ENCODE measurements at regions of chr12 and their contacts with region 1.

Region 1: DNA sequence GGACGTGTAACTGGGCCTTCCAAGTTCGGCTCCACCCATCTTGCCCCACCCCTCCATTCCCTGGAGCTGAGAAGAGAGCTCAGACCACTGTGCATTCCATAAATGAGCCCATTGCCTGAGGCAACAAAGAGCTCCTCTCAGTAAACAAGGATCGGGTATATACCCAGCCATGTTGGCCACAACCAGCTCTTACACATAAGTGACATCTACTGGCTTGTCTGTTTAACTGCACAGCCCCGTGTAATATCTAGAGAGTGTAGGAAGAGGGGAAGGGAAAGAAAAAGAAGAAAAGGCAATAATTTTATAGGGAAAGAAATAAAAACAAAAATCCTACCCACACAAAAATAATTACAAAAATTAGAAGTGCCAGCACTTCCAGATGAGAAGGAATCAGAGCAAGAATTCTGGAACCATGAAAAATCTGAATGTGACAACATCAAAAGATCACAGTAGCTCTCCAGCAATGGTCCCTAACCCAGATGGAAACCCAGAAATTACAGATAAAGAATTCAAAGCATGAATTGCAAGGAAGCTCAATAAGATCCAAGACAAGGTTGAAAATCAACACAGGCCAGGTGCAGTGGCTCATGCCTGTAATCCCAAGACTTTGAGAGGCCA is 308.1 kb downstream of the RPAP3 start:
- DNase-seq: peak in 5 of 9 experiments; percentile 35 to 80 (median 50)
- ATAC-seq: peak; percentile 82
- H3K4me3 ChIP-seq: no peak overlapping the region
- H3K4me3 Mint-ChIP-seq: no peak overlapping the region
- H3K27ac ChIP-seq: peak overlapping the region in 1 of 2 experiments; percentile 44
- H3K27ac Mint-ChIP-seq: peak overlapping the region; percentile 84
- H3K4me1 ChIP-seq: peaks cover 43% of the 10 kb centered on the region
- H3K4me1 Mint-ChIP-seq: peaks cover 58% of the 10 kb centered on the region
- H3K27me3 ChIP-seq: no peaks in the 10 kb centered on the region
- H3K27me3 Mint-ChIP-seq: no peaks in the 10 kb centered on the region
- CTCF ChIP-seq: peak; percentile 74

Region 2: GRCh38 chr12:47032644-47033043 is 365.1 kb before region 1 on chr12:
- CTCF ChIA-PET with region 1: interaction called, 58 read pairs
- POLR2A ChIA-PET with region 1: interaction called, 9 read pairs
- intact Hi-C with region 1: loop called (anchors 1 kb)
- DNase-seq: peak in 3 of 9 experiments; percentile 13 to 82 (median 74)
- ATAC-seq: peak; percentile 72
- H3K4me3 ChIP-seq: no peak overlapping the region
- H3K4me3 Mint-ChIP-seq: no peak overlapping the region
- H3K27ac ChIP-seq: no peak overlapping the region
- H3K27ac Mint-ChIP-seq: no peak overlapping the region
- H3K4me1 ChIP-seq: peaks cover 5% of the 10 kb centered on the region
- H3K4me1 Mint-ChIP-seq: peaks cover 29% of the 10 kb centered on the region
- H3K27me3 ChIP-seq: no peaks in the 10 kb centered on the region
- H3K27me3 Mint-ChIP-seq: no peaks in the 10 kb centered on the region
- CTCF ChIP-seq: peak; percentile 74

Region 3: GRCh38 chr12:47079468-47079980 is 318.2 kb before region 1 on chr12 and contains the starts of genes AMIGO2 and PCED1B:
- CTCF ChIA-PET with region 1: interaction called, 21 read pairs
- POLR2A ChIA-PET with region 1: interaction called, 7 read pairs
- intact Hi-C with region 1: loop called (anchors 2 kb)
- DNase-seq: peak; percentile 13 to 81 (median 69)
- ATAC-seq: peak; percentile 54
- H3K4me3 ChIP-seq: peak within 1 kb of the TSS; percentile 85 to 92
- H3K4me3 Mint-ChIP-seq: peak within 1 kb of the TSS; percentile 98
- H3K27ac ChIP-seq: peak within 1 kb of the TSS; percentile 63 to 85
- H3K27ac Mint-ChIP-seq: peak within 1 kb of the TSS; percentile 96
- H3K4me1 ChIP-seq: peaks cover 55% of the 10 kb centered on the region
- H3K4me1 Mint-ChIP-seq: peaks cover 76% of the 10 kb centered on the region
- H3K27me3 ChIP-seq: no peaks in the 10 kb centered on the region
- H3K27me3 Mint-ChIP-seq: no peaks in the 10 kb centered on the region
- CTCF ChIP-seq: no peak
- total RNA-seq, gene AMIGO2: 12.5 to 13.5 TPM
- total RNA-seq, gene PCED1B: 32.9 to 33.7 TPM

Region 4: GRCh38 chr12:47207340-47207717 is 190.4 kb before region 1 on chr12:
- CTCF ChIA-PET with region 1: interaction called, 15 read pairs
- POLR2A ChIA-PET with region 1: interaction called, 15 read pairs
- intact Hi-C with region 1: no loop called
- DNase-seq: peak in 5 of 9 experiments; percentile 38 to 78 (median 60)
- ATAC-seq: peak; percentile 40
- H3K4me3 ChIP-seq: peak overlapping the region; percentile 19 to 33
- H3K4me3 Mint-ChIP-seq: peak overlapping the region; percentile 71
- H3K27ac ChIP-seq: peak overlapping the region; percentile 8 to 80
- H3K27ac Mint-ChIP-seq: peak overlapping the region; percentile 92
- H3K4me1 ChIP-seq: peaks cover 75% of the 10 kb centered on the region
- H3K4me1 Mint-ChIP-seq: peaks cover 77% of the 10 kb centered on the region
- H3K27me3 ChIP-seq: no peaks in the 10 kb centered on the region
- H3K27me3 Mint-ChIP-seq: no peaks in the 10 kb centered on the region
- CTCF ChIP-seq: no peak

Region 5: DNA sequence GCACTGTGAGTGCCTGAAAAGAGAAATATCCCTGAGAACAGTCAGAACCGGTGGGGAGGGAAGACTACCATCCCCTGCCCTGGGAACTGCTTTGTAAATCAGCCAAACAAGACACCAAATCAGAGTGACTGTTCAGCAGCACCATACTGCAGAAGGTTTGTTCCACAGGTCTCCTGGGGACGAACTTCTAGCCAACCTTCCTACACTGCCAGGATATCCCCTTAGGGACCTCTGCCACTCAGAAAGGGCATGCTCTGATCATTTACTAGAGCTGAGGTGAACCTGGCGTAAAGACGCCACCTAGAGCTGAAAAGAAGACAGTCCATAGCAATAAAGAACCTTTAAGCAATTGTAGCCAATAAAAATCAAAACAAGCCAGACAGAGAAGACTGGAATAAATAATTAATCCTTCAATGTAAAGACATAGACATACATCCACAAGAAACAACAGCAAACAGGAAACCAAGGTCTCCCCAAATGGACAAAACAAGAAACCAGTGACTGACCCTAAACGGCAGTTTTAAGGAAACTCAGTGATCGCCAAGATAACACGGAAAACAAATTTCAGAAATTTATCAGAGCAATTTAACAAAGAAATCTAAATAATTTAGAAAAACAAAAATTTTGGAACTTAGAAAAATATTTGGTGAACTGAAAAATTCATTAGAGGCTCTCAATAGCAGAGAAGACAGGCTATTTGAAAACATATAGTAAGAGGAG is 89.9 kb before region 1 on chr12:
- CTCF ChIA-PET with region 1: interaction called, 30 read pairs
- POLR2A ChIA-PET with region 1: interaction called, 14 read pairs
- intact Hi-C with region 1: loop called (anchors 1 to 2 kb)
- DNase-seq: peak; percentile 21 to 81 (median 56)
- ATAC-seq: peak; percentile 91
- H3K4me3 ChIP-seq: peak overlapping the region; percentile 37 to 46
- H3K4me3 Mint-ChIP-seq: peak overlapping the region; percentile 81
- H3K27ac ChIP-seq: peak overlapping the region; percentile 21 to 25
- H3K27ac Mint-ChIP-seq: peak overlapping the region; percentile 88
- H3K4me1 ChIP-seq: peaks cover 12% of the 10 kb centered on the region
- H3K4me1 Mint-ChIP-seq: peaks cover 47% of the 10 kb centered on the region
- H3K27me3 ChIP-seq: no peaks in the 10 kb centered on the region
- H3K27me3 Mint-ChIP-seq: no peaks in the 10 kb centered on the region
- CTCF ChIP-seq: peak; percentile 60

Region 6: DNA sequence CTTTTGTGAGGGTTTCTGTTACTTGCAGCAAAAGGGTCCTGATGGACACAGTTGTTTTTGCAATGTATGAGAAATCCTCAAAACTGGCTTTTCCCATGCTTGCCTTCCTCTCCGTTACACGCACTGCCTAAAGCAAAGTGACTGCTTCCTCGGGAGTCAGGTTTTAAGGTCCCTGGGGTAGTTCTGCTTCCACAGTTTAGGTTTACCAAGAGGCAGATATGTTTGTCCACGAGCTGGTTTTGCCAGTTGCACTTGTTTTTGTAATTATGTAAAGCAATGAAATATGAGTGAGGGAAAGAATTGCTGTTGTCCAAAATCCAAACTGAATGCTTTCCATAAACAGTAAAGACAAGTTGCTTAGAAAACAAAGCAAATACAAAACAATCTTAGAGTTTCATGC is 27.4 kb before region 1 on chr12:
- CTCF ChIA-PET with region 1: interaction called, 21 read pairs
- POLR2A ChIA-PET with region 1: interaction called, 8 read pairs
- intact Hi-C with region 1: no loop called
- DNase-seq: no peak
- ATAC-seq: no peak
- H3K4me3 ChIP-seq: no peak overlapping the region
- H3K4me3 Mint-ChIP-seq: no peak overlapping the region
- H3K27ac ChIP-seq: no peak overlapping the region
- H3K27ac Mint-ChIP-seq: no peak overlapping the region
- H3K4me1 ChIP-seq: peaks cover 32% of the 10 kb centered on the region
- H3K4me1 Mint-ChIP-seq: peaks cover 8% of the 10 kb centered on the region
- H3K27me3 ChIP-seq: no peaks in the 10 kb centered on the region
- H3K27me3 Mint-ChIP-seq: no peaks in the 10 kb centered on the region
- CTCF ChIP-seq: no peak

Region 7: GRCh38 chr12:47419497-47419896 is 21.7 kb after region 1 on chr12:
- CTCF ChIA-PET with region 1: interaction called, 13 read pairs
- POLR2A ChIA-PET with region 1: no interaction called
- intact Hi-C with region 1: no loop called
- DNase-seq: no peak
- ATAC-seq: no peak
- H3K4me3 ChIP-seq: no peak overlapping the region
- H3K4me3 Mint-ChIP-seq: no peak overlapping the region
- H3K27ac ChIP-seq: no peak overlapping the region
- H3K27ac Mint-ChIP-seq: no peak overlapping the region
- H3K4me1 ChIP-seq: no peaks in the 10 kb centered on the region
- H3K4me1 Mint-ChIP-seq: peaks cover 19% of the 10 kb centered on the region
- H3K27me3 ChIP-seq: no peaks in the 10 kb centered on the region
- H3K27me3 Mint-ChIP-seq: no peaks in the 10 kb centered on the region
- CTCF ChIP-seq: no peak